ENCODE measurements at regions of chr16 and their contacts with region 1.

Region 1: GRCh38 chr16:87416826-87417527 is 24.8 kb downstream of the MAP1LC3B start:
- DNase-seq: peak; percentile 61
- H3K4me3 ChIP-seq: no peak overlapping the region
- H3K27ac ChIP-seq: no peak overlapping the region
- H3K4me1 ChIP-seq: no peaks in the 10 kb centered on the region
- H3K27me3 ChIP-seq: no peaks in the 10 kb centered on the region
- CTCF ChIP-seq: peak; percentile 58 to 59
- POLR2A ChIP-seq: no peak

Region 2: GRCh38 chr16:87278191-87279095 is 138.5 kb before region 1 on chr16:
- CTCF ChIA-PET with region 1: no interaction called
- POLR2A ChIA-PET with region 1: no interaction called
- dilution Hi-C with region 1: no loop called
- intact Hi-C with region 1: no loop called
- DNase-seq: peak; percentile 86
- H3K4me3 ChIP-seq: no peak overlapping the region
- H3K27ac ChIP-seq: no peak overlapping the region
- H3K4me1 ChIP-seq: peaks cover 4% of the 10 kb centered on the region
- H3K27me3 ChIP-seq: no peaks in the 10 kb centered on the region
- CTCF ChIP-seq: peak; percentile 92 to 94
- POLR2A ChIP-seq: no peak

Region 3: GRCh38 chr16:87461466-87461991 is 44.6 kb after region 1 on chr16:
- CTCF ChIA-PET with region 1: interaction called, 12 read pairs
- POLR2A ChIA-PET with region 1: no interaction called
- dilution Hi-C with region 1: no loop called
- intact Hi-C with region 1: loop called (anchors 5 kb)
- DNase-seq: peak; percentile 77
- H3K4me3 ChIP-seq: peak overlapping the region in 1 of 3 experiments; percentile 18
- H3K27ac ChIP-seq: peak overlapping the region; percentile 60
- H3K4me1 ChIP-seq: peaks cover 65% of the 10 kb centered on the region
- H3K27me3 ChIP-seq: no peaks in the 10 kb centered on the region
- CTCF ChIP-seq: peak; percentile 29 to 37
- POLR2A ChIP-seq: no peak

Region 4: GRCh38 chr16:87492721-87493607 is 76.0 kb after region 1 on chr16 and contains the start of gene ZCCHC14:
- CTCF ChIA-PET with region 1: interaction called, 11 read pairs
- POLR2A ChIA-PET with region 1: no interaction called
- dilution Hi-C with region 1: no loop called
- intact Hi-C with region 1: loop called (anchors 2 kb)
- DNase-seq: peak; percentile 99
- H3K4me3 ChIP-seq: peak within 1 kb of the TSS in 2 of 3 experiments; percentile 47 to 56
- H3K27ac ChIP-seq: peak within 1 kb of the TSS; percentile 68
- H3K4me1 ChIP-seq: peaks cover 23% of the 10 kb centered on the region
- H3K27me3 ChIP-seq: no peaks in the 10 kb centered on the region
- CTCF ChIP-seq: no peak
- POLR2A ChIP-seq: peak; percentile 73
- total RNA-seq, gene ZCCHC14: 30.9 and 34.0 TPM in 2 replicates

Region 5: DNA sequence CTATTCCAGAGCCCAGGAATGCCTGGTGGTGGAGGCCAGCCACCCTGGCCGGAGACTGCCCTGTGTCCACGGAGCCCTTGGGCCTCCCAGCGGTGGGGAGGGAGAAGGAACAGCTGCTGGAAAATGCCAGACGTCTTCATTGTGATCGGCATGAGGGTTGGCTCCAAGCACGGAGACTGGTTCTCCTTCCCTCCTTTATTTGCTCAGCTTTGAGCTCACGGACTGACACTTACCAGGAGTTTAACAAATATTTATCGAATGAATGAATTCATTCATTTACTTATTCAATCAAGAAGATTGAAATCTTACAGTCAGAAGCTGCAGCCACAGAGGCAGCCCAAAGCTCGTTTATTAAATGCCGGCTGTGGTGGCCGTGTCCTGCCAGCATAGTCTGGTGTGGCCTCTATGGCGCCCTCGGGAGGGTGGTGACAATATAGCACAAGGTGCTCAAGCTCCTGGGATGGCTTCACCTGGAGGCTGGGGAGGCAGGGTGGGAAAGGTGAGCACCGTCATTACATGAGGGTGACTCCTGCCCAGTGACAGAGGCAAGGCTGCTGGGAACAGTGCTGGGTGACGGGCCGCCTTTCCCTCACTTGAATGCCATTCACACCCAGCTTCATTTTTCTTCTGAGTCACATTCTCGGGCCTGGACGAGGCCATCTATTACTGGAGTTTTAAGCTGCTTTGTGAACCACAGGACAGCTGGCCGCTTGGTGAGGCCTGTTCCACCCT is 154.3 kb after region 1 on chr16:
- CTCF ChIA-PET with region 1: interaction called, 47 read pairs
- POLR2A ChIA-PET with region 1: no interaction called
- dilution Hi-C with region 1: no loop called
- intact Hi-C with region 1: loop called (anchors 1 kb)
- DNase-seq: peak; percentile 51
- H3K4me3 ChIP-seq: no peak overlapping the region
- H3K27ac ChIP-seq: no peak overlapping the region
- H3K4me1 ChIP-seq: no peaks in the 10 kb centered on the region
- H3K27me3 ChIP-seq: no peaks in the 10 kb centered on the region
- CTCF ChIP-seq: peak; percentile 39 to 67
- POLR2A ChIP-seq: no peak

Region 6: GRCh38 chr16:87636072-87636684 is 219.2 kb after region 1 on chr16:
- CTCF ChIA-PET with region 1: interaction called, 54 read pairs
- POLR2A ChIA-PET with region 1: no interaction called
- dilution Hi-C with region 1: no loop called
- intact Hi-C with region 1: loop called (anchors 2 kb)
- DNase-seq: peak; percentile 61
- H3K4me3 ChIP-seq: no peak overlapping the region
- H3K27ac ChIP-seq: no peak overlapping the region
- H3K4me1 ChIP-seq: no peaks in the 10 kb centered on the region
- H3K27me3 ChIP-seq: peaks cover 2% of the 10 kb centered on the region in 2 experiments
- CTCF ChIP-seq: peak; percentile 56 to 71
- POLR2A ChIP-seq: no peak